Mucosa of descending colon (tissue), 3 donors: ENCODE measurements at regions of chr20 and their contacts with region 1.

Region 1: GRCh38 chr20:50450881-50451752 is 59.1 kb upstream of the PTPN1 start:
- DNase-seq: peak in 2 of 3 donors; percentile 4 to 56
- ATAC-seq: peak; percentile 51
- H3K4me3 ChIP-seq: no peak overlapping the region
- H3K4me1 ChIP-seq: peaks cover 14% of the 10 kb centered on the region
- CTCF ChIP-seq: no peak

Region 2: GRCh38 chr20:50366270-50367103 is 84.6 kb before region 1 on chr20:
- intact Hi-C with region 1: no loop called
- DNase-seq: peak; percentile 80 to 97 (median 86)
- ATAC-seq: peak; percentile 82
- H3K4me3 ChIP-seq: no peak overlapping the region
- H3K4me1 ChIP-seq: peaks cover 38% of the 10 kb centered on the region
- CTCF ChIP-seq: no peak

Region 3: DNA sequence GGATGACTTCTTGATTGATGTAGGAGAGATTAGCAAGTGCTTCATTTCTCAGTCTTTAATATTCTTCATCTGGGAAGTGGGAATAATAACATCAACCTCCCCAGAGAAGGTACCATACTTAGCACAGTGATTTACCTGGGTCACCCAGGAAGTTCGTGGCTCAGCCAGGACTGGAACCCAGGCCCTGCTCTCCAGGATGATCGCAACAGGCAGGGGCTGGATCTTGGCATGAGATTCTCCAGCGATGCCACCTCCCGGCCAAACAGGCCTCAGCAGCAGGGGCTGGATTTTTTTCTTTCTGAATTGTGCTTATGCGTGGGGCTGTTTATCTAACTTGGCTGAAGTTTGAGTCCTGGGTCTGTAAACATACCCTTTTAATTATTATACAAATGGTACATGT is 70.5 kb before region 1 on chr20:
- intact Hi-C with region 1: loop called in 1 of 2 experiments (anchors 10 kb)
- DNase-seq: peak in 1 of 3 donors; percentile 63
- ATAC-seq: peak; percentile 5
- H3K4me3 ChIP-seq: no peak overlapping the region
- H3K4me1 ChIP-seq: peaks cover 43% of the 10 kb centered on the region
- CTCF ChIP-seq: no peak